H1 (cell line): ENCODE measurements at regions of chr3 and their contacts with region 1.

Region 1: DNA sequence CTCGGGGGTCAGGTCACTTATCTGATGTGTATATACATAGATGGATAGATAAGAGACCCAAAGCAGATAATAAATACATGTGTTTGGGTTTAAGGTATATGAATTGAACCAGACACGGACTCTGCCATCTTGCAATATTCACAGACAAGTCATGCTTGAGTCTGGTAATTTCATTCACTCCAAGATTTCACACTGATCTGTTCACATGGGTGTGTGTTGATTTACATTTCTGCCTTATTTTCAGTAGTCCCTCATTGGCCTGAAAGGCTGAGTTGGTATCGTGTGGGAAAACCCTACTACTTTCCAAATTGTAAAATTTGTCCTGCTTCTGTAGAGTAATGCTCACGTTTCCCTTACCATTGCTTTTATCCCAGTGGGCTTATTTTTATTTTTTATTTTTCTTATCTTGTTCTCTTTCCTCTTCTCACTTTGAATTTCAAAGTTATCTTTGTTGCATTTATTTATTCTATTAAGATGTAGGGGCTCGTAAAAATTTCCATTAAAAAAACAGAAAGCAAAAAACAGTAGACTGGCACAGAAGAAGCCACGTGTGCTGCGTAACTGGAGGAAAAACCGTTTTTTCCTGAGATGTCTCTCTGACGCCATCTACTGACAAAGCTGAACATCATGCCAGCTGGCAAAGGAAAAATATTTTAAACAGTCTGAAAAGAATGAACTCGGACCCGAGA is 10.8 kb upstream of the MFSD1 start:
- DNase-seq: no peak
- H3K4me3 ChIP-seq: no peak overlapping the region
- H3K27ac ChIP-seq: no peak overlapping the region
- H3K4me1 ChIP-seq: no peaks in the 10 kb centered on the region
- H3K27me3 ChIP-seq: no peaks in the 10 kb centered on the region
- CTCF ChIP-seq: peak; percentile 20 to 87 (median 76)
- EP300 ChIP-seq: no peak
- POLR2A ChIP-seq: no peak
- RAD21 ChIP-seq: peak; percentile 86 to 88

Region 2: DNA sequence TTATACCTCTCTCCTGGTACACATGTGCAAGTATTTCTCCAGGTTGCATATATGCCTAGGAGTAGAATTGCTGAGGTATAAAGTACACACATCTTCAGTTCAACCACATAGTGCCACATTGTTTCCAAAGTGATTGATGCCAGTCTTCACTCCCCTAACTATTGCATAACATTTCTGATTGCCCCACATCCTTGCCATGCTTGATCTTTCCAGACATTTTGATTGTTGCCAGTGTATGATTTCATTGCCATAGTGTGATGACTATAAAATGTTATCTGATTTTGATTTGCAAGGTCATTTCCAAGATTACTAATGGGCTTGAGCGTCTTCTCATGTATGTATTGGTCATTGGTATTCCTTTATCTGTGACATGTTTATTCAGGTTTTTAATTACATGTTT is 281.2 kb before region 1 on chr3:
- CTCF ChIA-PET with region 1: no interaction called
- POLR2A ChIA-PET with region 1: no interaction called
- DNase-seq: no peak
- H3K4me3 ChIP-seq: no peak overlapping the region
- H3K27ac ChIP-seq: no peak overlapping the region
- H3K4me1 ChIP-seq: no peaks in the 10 kb centered on the region
- H3K27me3 ChIP-seq: no peaks in the 10 kb centered on the region
- CTCF ChIP-seq: no peak
- EP300 ChIP-seq: no peak
- POLR2A ChIP-seq: no peak
- RAD21 ChIP-seq: no peak

Region 3: GRCh38 chr3:158659454-158660237 is 131.4 kb before region 1 on chr3:
- CTCF ChIA-PET with region 1: interaction called, 48 read pairs
- POLR2A ChIA-PET with region 1: no interaction called
- DNase-seq: peak in 1 of 2 experiments; percentile 64
- H3K4me3 ChIP-seq: no peak overlapping the region
- H3K27ac ChIP-seq: no peak overlapping the region
- H3K4me1 ChIP-seq: no peaks in the 10 kb centered on the region
- H3K27me3 ChIP-seq: no peaks in the 10 kb centered on the region
- CTCF ChIP-seq: peak; percentile 33 to 62 (median 46)
- EP300 ChIP-seq: no peak
- POLR2A ChIP-seq: no peak
- RAD21 ChIP-seq: peak; percentile 16 to 49; a peak in 3 of 4 replicates

Region 4: GRCh38 chr3:158702815-158703481 is 88.1 kb before region 1 on chr3:
- CTCF ChIA-PET with region 1: no interaction called
- POLR2A ChIA-PET with region 1: no interaction called
- DNase-seq: no peak
- H3K4me3 ChIP-seq: no peak overlapping the region
- H3K27ac ChIP-seq: no peak overlapping the region
- H3K4me1 ChIP-seq: no peaks in the 10 kb centered on the region
- H3K27me3 ChIP-seq: no peaks in the 10 kb centered on the region
- CTCF ChIP-seq: no peak
- EP300 ChIP-seq: no peak
- POLR2A ChIP-seq: no peak
- RAD21 ChIP-seq: no peak

Region 5: GRCh38 chr3:158765518-158766286 is 25.3 kb before region 1 on chr3:
- CTCF ChIA-PET with region 1: interaction called, 25 read pairs
- POLR2A ChIA-PET with region 1: no interaction called
- DNase-seq: no peak
- H3K4me3 ChIP-seq: no peak overlapping the region
- H3K27ac ChIP-seq: no peak overlapping the region
- H3K4me1 ChIP-seq: peaks cover 3 to 7% (median 7%) of the 10 kb centered on the region in 4 experiments; a peak in 4 of 7 replicates
- H3K27me3 ChIP-seq: no peaks in the 10 kb centered on the region
- CTCF ChIP-seq: no peak
- EP300 ChIP-seq: no peak
- POLR2A ChIP-seq: no peak
- RAD21 ChIP-seq: no peak

Region 6: DNA sequence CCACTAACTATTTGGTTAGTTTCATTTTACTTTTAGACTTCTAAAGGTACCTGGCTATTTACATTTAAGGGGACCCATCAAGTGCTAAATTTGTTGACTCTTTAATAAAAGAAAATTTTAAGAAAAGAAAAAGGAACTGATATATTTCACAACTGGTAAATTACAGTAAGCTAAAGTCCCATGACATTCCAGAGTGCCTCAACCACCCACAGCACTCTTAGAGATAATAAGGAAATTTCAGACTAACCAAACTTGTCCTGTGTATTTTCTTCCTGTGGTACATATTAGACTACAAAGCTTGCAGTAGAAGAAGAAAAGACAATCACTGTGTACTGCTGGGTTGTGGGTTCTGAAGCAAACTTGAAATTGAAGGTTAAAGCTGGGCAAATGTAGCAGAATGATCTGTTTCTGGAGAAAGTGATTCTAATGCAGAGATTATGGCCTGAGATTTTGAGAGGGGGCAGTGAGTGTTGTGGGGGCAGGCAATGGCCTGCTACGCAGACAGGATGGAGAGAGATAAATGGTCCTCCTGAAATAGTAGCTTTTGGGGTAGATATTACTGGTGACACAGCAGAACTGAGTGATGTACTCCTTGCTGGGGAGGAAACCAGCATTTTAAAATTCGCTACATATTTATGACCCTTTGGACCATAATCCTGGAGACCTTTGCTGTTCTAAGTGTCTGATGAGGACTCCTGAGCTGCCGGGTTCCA is 13.7 kb before region 1 on chr3:
- CTCF ChIA-PET with region 1: interaction called, 43 read pairs
- POLR2A ChIA-PET with region 1: no interaction called
- DNase-seq: no peak
- H3K4me3 ChIP-seq: no peak overlapping the region
- H3K27ac ChIP-seq: no peak overlapping the region
- H3K4me1 ChIP-seq: no peaks in the 10 kb centered on the region
- H3K27me3 ChIP-seq: no peaks in the 10 kb centered on the region
- CTCF ChIP-seq: no peak
- EP300 ChIP-seq: no peak
- POLR2A ChIP-seq: no peak
- RAD21 ChIP-seq: no peak

Region 7: GRCh38 chr3:158801696-158802408 is 10.8 kb after region 1 on chr3 and contains the start of gene MFSD1:
- CTCF ChIA-PET with region 1: interaction called, 13 read pairs
- POLR2A ChIA-PET with region 1: no interaction called
- DNase-seq: peak in 1 of 2 experiments; percentile 89
- H3K4me3 ChIP-seq: peak within 1 kb of the TSS; percentile 48 to 90 (median 82)
- H3K27ac ChIP-seq: no peak within 1 kb of the TSS
- H3K4me1 ChIP-seq: peaks cover 0 to 9% (median 2%) of the 10 kb centered on the region in 4 experiments; a peak in 2 of 7 replicates
- H3K27me3 ChIP-seq: peaks cover 8 to 18% (median 15%) of the 10 kb centered on the region in 4 experiments
- CTCF ChIP-seq: no peak
- EP300 ChIP-seq: peak in 1 of 2 experiments; percentile 17; a peak in 1 of 3 replicates
- POLR2A ChIP-seq: peak in 1 of 2 experiments; percentile 50; a peak in 2 of 3 replicates
- RAD21 ChIP-seq: no peak
- total RNA-seq, gene MFSD1: 9.3 and 11.0 TPM in 2 replicates